ENCODE measurements at regions of chr1 and their contacts with region 1.

Region 1: DNA sequence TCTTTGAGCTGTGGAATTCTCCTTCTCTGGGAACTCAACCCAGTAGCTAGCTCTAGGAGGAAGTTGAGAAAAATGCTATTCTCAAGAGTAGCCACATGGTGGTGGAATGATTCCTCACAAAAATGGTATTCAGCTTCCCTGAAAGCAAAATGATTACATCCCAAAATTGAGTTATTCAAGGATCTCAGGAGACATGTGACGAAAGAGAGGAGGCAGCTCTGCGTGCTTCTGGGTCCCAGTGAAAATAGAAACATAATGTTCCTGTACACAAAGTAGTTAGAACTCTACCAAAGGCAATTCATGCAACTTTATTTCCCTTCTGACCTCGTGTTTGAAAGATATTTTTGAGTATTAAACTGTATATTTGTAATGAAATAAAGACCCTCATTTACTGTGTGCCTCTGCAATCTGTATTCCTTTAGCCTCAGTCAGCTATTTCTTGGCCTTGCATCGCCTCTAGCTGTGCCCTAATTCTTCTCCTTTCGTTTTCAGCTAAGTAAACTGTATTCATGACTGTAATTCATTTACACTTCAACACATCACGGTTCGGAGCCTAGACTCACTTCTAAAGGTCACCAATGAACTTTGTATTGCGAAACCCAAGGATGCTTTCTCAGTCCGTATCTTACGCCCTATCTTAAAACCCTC is 167.3 kb downstream of the FASLG start:
- DNase-seq: peak in 2 of 5 donors; percentile 59 to 73
- H3K4me3 ChIP-seq: peak overlapping the region in 2 of 3 donors; percentile 44 to 58
- H3K27ac ChIP-seq: peak overlapping the region; percentile 11 to 14
- H3K4me1 ChIP-seq: peaks cover 0 to 4% (median 0%) of the 10 kb centered on the region in 3 donors
- H3K27me3 ChIP-seq: no peaks in the 10 kb centered on the region
- CTCF ChIP-seq: peak; percentile 70

Region 2: GRCh38 chr1:172727956-172728603 is 98.1 kb before region 1 on chr1:
- intact Hi-C with region 1: no loop called
- DNase-seq: no peak
- H3K4me3 ChIP-seq: no peak overlapping the region
- H3K27ac ChIP-seq: no peak overlapping the region
- H3K4me1 ChIP-seq: no peaks in the 10 kb centered on the region
- H3K27me3 ChIP-seq: no peaks in the 10 kb centered on the region
- CTCF ChIP-seq: peak; percentile 37

Region 3: DNA sequence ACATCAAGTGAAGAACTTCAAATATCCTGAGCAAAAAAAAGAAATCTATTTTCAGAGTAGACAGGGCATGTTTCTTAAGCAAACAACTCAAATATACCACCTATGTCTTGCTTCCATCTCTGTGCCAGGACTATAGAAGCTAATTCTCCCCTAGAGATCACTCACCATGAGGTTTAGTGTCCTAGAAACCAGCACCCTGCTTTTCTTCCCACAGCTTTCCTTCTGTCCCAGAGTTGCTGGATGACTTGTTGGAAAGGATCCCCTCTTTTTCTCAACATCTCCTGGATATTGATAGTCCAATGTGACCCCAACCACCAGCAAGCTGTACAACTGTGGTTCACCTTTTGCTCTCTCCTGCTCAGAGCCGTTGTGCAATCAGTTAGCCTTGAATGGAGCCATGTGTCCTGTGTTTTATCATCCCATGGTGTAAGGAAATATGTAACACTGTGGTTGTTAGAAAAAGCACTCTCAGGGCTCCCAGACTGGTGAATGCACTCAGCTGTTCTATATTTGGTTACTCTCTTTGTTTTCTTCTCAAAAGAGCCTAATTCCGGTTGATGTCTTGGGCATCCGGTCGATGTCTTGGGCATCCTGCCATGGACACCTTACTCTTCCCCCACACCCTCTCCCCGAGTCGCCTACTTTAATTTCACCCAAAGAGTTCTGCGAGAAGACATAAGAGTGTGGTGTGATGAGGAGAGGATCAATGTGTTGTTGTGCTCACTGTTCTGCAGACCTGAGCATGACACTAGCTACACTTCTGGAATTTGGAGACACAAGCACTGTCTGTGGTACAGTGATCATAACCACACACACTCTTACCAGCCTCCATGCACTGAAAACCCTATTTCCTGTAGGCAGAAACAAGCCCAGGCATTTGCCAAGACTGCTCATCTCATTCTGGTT is 379.2 kb after region 1 on chr1:
- intact Hi-C with region 1: loop called (anchors 5 kb)
- DNase-seq: no peak
- H3K4me3 ChIP-seq: no peak overlapping the region
- H3K27ac ChIP-seq: no peak overlapping the region
- H3K4me1 ChIP-seq: peaks cover 0 to 14% (median 5%) of the 10 kb centered on the region in 3 donors
- H3K27me3 ChIP-seq: no peaks in the 10 kb centered on the region
- CTCF ChIP-seq: no peak